MCF 10A (cell line): ENCODE measurements at regions of chr12 and their contacts with region 1.

Region 1: DNA sequence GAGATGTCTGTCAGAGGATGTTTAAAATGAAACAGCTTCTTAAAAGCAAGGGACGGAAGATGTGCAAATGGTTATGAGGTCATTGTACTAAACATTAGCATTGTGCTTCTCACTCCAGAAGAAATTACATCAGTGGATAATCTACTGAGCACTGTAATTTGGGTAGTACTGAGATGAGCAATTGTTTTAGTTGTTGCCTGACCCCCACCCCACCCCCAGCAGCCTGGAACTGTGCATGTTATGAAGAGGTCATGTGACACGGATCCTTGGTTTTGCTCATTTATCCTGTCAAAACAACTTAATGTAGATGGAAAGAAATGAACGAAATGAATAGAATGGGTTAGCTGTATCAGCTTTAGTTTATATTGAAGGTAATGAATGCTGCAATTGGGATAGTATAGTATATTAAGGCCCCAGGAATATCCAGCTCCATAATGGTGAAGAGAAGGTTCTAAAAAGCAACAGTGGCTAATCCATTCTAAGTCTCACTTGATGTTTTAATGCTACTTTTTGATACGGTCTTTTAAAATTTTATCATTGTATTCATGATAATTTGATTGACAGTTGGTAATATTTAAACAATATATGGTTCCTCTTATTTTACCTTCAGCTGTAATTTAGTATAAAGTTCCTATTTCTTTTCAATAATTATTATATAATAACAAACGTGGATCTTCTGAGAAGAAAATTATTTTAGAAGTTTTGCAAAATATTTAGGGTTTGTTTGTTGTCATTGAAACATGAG is 58.5 kb downstream of the WNK1 start:
- DNase-seq: no peak
- H3K4me3 Mint-ChIP-seq: no peak overlapping the region
- H3K27ac Mint-ChIP-seq: no peak overlapping the region
- H3K4me1 Mint-ChIP-seq: peaks cover 27% of the 10 kb centered on the region
- H3K27me3 Mint-ChIP-seq: no peaks in the 10 kb centered on the region
- CTCF ChIP-seq: no peak

Region 2: GRCh38 chr12:575948-576612 is 234.8 kb before region 1 on chr12:
- CTCF ChIA-PET with region 1: interaction called, 74 read pairs
- POLR2A ChIA-PET with region 1: interaction called, 53 read pairs
- intact Hi-C with region 1: loop called (anchors 1 kb)
- DNase-seq: peak; percentile 78
- H3K4me3 Mint-ChIP-seq: peak overlapping the region; percentile 35
- H3K27ac Mint-ChIP-seq: peak overlapping the region; percentile 91
- H3K4me1 Mint-ChIP-seq: peaks cover 44% of the 10 kb centered on the region
- H3K27me3 Mint-ChIP-seq: no peaks in the 10 kb centered on the region
- CTCF ChIP-seq: peak; percentile 99

Region 3: DNA sequence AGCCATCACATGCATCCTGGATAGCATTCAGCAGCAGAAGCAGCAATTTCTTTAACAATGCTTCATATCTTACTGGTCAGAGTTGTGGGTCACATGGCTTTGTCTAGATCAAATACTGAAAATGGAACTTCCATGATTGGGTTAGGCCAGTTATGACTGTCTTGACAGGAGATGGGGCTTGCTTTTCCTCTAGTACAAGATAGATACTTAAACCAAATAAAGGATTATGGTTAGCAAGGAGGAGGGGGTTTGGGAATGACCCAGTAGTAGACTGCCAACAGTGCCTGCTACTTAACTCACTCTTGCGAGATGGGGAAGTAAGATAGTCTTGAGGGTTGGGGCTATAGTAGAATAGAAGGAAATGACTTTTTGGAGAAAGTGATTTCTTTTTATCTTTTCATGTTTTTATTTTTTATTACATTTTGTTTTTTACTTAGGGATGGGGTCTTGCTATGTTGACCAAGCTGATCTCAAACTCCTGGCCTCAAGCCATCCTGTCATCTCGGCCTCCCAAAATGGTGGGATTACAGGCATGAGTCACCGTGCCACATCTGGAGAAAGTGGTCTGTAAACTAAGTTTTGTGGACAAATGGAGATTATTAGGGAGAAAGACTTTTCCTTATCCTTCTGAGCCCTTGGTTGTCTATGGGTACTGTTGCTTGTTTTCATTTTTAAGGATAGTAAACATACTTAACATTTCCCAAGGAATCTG is 20.8 kb before region 1 on chr12:
- CTCF ChIA-PET with region 1: interaction called, 14 read pairs
- POLR2A ChIA-PET with region 1: interaction called, 4 read pairs
- intact Hi-C with region 1: no loop called
- DNase-seq: no peak
- H3K4me3 Mint-ChIP-seq: no peak overlapping the region
- H3K27ac Mint-ChIP-seq: peak overlapping the region; percentile 74
- H3K4me1 Mint-ChIP-seq: peaks cover 59% of the 10 kb centered on the region
- H3K27me3 Mint-ChIP-seq: no peaks in the 10 kb centered on the region
- CTCF ChIP-seq: no peak

Region 4: DNA sequence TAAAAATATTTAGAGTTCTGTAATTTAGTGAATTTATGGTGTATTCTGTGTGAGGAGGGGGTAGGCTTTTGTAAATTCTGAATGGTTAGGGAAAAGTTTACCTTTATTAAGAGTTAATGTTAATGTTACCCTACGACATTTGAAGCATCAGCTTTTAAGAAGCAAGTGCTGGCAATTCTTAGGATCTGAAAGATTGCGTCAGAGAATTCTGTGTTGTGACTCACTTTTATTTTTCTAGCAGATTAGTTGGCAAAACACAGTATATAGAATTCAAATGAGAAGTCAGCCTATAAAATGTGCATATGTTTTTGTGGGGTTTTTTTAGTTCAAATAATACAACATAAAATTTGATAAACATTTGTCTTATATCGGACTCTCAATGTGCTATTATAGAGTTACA is 41.1 kb after region 1 on chr12:
- CTCF ChIA-PET with region 1: interaction called, 45 read pairs
- POLR2A ChIA-PET with region 1: interaction called, 43 read pairs
- intact Hi-C with region 1: loop called (anchors 1 kb)
- DNase-seq: peak; percentile 76
- H3K4me3 Mint-ChIP-seq: peak overlapping the region; percentile 63
- H3K27ac Mint-ChIP-seq: peak overlapping the region; percentile 80
- H3K4me1 Mint-ChIP-seq: peaks cover 44% of the 10 kb centered on the region
- H3K27me3 Mint-ChIP-seq: no peaks in the 10 kb centered on the region
- CTCF ChIP-seq: no peak

Region 5: GRCh38 chr12:949453-950191 is 138.8 kb after region 1 on chr12 and contains the start of gene RAD52:
- CTCF ChIA-PET with region 1: interaction called, 17 read pairs
- POLR2A ChIA-PET with region 1: interaction called, 22 read pairs
- intact Hi-C with region 1: loop called (anchors 1 kb)
- DNase-seq: peak; percentile 98
- H3K4me3 Mint-ChIP-seq: peak within 1 kb of the TSS; percentile 96
- H3K27ac Mint-ChIP-seq: peak within 1 kb of the TSS; percentile 86
- H3K4me1 Mint-ChIP-seq: peaks cover 26% of the 10 kb centered on the region
- H3K27me3 Mint-ChIP-seq: no peaks in the 10 kb centered on the region
- CTCF ChIP-seq: peak; percentile 92
- total RNA-seq, gene RAD52: 26.0 and 27.9 TPM in 2 replicates

Region 6: DNA sequence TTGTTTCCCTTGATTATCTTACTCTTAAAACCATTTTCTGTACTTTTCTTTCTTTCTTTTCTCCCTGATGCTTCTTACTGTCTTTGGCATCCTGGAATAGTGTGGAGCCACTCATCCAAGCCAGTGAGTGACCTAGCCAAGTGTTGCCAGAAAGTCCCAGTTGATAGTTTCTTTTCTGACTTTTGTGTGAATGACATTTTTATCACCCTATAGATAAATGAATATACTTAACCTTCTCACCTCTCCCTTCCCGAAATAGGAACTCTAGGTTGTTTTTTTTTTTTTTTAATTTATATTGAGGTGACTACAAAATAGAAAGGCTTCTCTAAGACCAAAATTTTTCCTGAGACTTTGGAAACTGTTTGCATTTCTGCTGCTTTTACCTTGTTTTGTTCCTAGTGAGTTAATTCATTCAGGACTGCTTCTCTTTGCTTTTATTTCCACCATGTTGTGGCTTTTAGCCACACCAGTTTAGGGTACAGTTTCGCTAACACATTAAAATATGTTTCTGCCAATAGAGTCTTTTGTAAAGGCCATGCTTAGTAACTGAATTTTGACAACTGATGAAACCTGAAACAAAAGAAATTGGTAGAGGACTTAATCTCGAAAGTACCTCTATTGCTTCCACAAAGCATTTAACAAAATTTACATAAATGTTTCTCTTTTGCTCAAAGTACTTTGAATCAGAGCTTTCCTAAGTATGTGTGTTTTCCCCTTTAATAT is 374.8 kb after region 1 on chr12:
- CTCF ChIA-PET with region 1: no interaction called
- POLR2A ChIA-PET with region 1: no interaction called
- intact Hi-C with region 1: no loop called
- DNase-seq: no peak
- H3K4me3 Mint-ChIP-seq: no peak overlapping the region
- H3K27ac Mint-ChIP-seq: no peak overlapping the region
- H3K4me1 Mint-ChIP-seq: no peaks in the 10 kb centered on the region
- H3K27me3 Mint-ChIP-seq: no peaks in the 10 kb centered on the region
- CTCF ChIP-seq: no peak

Region 7: GRCh38 chr12:1373901-1374695 is 563.3 kb after region 1 on chr12:
- CTCF ChIA-PET with region 1: no interaction called
- POLR2A ChIA-PET with region 1: no interaction called
- intact Hi-C with region 1: no loop called
- DNase-seq: no peak
- H3K4me3 Mint-ChIP-seq: no peak overlapping the region
- H3K27ac Mint-ChIP-seq: no peak overlapping the region
- H3K4me1 Mint-ChIP-seq: no peaks in the 10 kb centered on the region
- H3K27me3 Mint-ChIP-seq: no peaks in the 10 kb centered on the region
- CTCF ChIP-seq: no peak